Activated CD4-positive, alpha-beta memory T cell treated with anti-CD3 and anti-CD28 coated beads for 36 hours (primary cell): ENCODE measurements at regions of chr6 and their contacts with region 1.

Region 1: GRCh38 chr6:56637640-56638039 is 5.0 kb downstream of the DST start:
- DNase-seq: no peak
- H3K4me3 Mint-ChIP-seq: no peak overlapping the region
- H3K27ac Mint-ChIP-seq: no peak overlapping the region
- H3K4me1 Mint-ChIP-seq: no peaks in the 10 kb centered on the region
- H3K27me3 Mint-ChIP-seq: peaks cover 5% of the 10 kb centered on the region

Region 2: DNA sequence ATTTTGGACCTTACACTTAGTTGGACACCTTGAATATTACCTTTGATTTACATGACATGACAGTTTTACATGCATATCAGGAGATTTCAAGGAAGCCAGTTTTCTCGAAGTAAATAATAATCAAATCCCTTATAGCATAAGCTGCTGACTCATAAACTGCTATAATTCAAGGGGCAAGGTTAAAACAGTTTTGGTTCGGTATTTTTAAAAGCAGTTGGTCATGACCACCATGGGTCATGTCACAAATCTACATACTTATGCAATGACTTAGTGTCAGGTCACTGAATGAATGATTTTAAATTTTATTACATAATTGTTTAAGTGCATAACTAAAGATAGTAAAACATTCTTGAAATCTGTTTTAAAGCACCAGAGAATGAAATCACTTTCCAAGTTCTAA is 153.0 kb before region 1 on chr6:
- CTCF ChIA-PET with region 1: no interaction called
- POLR2A ChIA-PET with region 1: no interaction called
- intact Hi-C with region 1: no loop called
- DNase-seq: no peak
- H3K4me3 Mint-ChIP-seq: no peak overlapping the region
- H3K27ac Mint-ChIP-seq: no peak overlapping the region
- H3K4me1 Mint-ChIP-seq: no peaks in the 10 kb centered on the region
- H3K27me3 Mint-ChIP-seq: no peaks in the 10 kb centered on the region

Region 3: GRCh38 chr6:56699066-56699654 is 61.5 kb after region 1 on chr6:
- CTCF ChIA-PET with region 1: interaction called, 5 read pairs
- POLR2A ChIA-PET with region 1: no interaction called
- intact Hi-C with region 1: loop called (anchors 1 kb)
- DNase-seq: no peak
- H3K4me3 Mint-ChIP-seq: no peak overlapping the region
- H3K27ac Mint-ChIP-seq: no peak overlapping the region
- H3K4me1 Mint-ChIP-seq: no peaks in the 10 kb centered on the region
- H3K27me3 Mint-ChIP-seq: peaks cover 1% of the 10 kb centered on the region

Region 4: GRCh38 chr6:56713254-56713672 is 75.6 kb after region 1 on chr6:
- CTCF ChIA-PET with region 1: no interaction called
- POLR2A ChIA-PET with region 1: no interaction called
- intact Hi-C with region 1: no loop called
- DNase-seq: no peak
- H3K4me3 Mint-ChIP-seq: no peak overlapping the region
- H3K27ac Mint-ChIP-seq: no peak overlapping the region
- H3K4me1 Mint-ChIP-seq: no peaks in the 10 kb centered on the region
- H3K27me3 Mint-ChIP-seq: peaks cover 1% of the 10 kb centered on the region

Region 5: GRCh38 chr6:56851541-56852259 is 214.1 kb after region 1 on chr6:
- CTCF ChIA-PET with region 1: interaction called, 7 read pairs
- POLR2A ChIA-PET with region 1: no interaction called
- intact Hi-C with region 1: loop called (anchors 5 kb)
- DNase-seq: peak; percentile 68
- H3K4me3 Mint-ChIP-seq: peak overlapping the region; percentile 56
- H3K27ac Mint-ChIP-seq: no peak overlapping the region
- H3K4me1 Mint-ChIP-seq: peaks cover 17% of the 10 kb centered on the region
- H3K27me3 Mint-ChIP-seq: peaks cover 39% of the 10 kb centered on the region